ENCODE measurements at regions of chr17 and their contacts with region 1.

Region 1: GRCh38 chr17:2041561-2042366 is at the start of gene OVCA2:
- DNase-seq: peak; percentile 98
- ATAC-seq: peak; percentile 92
- H3K4me3 ChIP-seq: peak within 1 kb of the TSS; percentile 69 to 84 (median 81)
- H3K4me3 Mint-ChIP-seq: peak within 1 kb of the TSS; percentile 91
- H3K27ac ChIP-seq: peak within 1 kb of the TSS; percentile 78 to 94
- H3K27ac Mint-ChIP-seq: peak within 1 kb of the TSS; percentile 92
- H3K4me1 ChIP-seq: peaks cover 12 to 15% of the 10 kb centered on the region in 2 donors
- H3K4me1 Mint-ChIP-seq: peaks cover 25% of the 10 kb centered on the region
- H3K27me3 ChIP-seq: no peaks in the 10 kb centered on the region
- H3K27me3 Mint-ChIP-seq: no peaks in the 10 kb centered on the region
- CTCF ChIP-seq: peak; percentile 59
- total RNA-seq, gene OVCA2: 22.4 and 23.2 TPM in 2 replicates

Region 2: DNA sequence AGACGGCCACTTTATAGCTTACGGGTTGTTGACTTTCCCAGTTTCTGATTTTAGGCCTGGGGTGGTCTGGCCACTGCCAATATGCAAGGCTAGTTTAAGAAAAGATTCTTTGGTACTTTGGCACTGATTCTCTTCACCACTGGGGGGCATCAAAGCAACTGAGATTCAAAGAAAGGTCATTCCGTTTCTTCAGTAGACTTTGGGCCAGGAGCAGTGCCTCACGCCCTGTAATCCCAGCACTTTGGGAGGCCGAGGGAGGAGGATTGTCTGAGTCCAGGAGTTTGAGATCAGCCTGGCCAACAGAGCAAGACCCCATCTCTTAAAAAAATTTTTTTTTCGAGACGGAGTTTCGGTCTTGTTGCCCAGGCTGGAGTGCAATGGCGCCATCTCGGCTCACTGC is 158.9 kb before region 1 on chr17:
- CTCF ChIA-PET with region 1: interaction called, 6 read pairs
- POLR2A ChIA-PET with region 1: no interaction called
- intact Hi-C with region 1: loop called (anchors 5 kb)
- DNase-seq: peak; percentile 55
- ATAC-seq: peak; percentile 53
- H3K4me3 ChIP-seq: no peak overlapping the region
- H3K4me3 Mint-ChIP-seq: no peak overlapping the region
- H3K27ac ChIP-seq: no peak overlapping the region
- H3K27ac Mint-ChIP-seq: no peak overlapping the region
- H3K4me1 ChIP-seq: no peaks in the 10 kb centered on the region
- H3K4me1 Mint-ChIP-seq: no peaks in the 10 kb centered on the region
- H3K27me3 ChIP-seq: no peaks in the 10 kb centered on the region
- H3K27me3 Mint-ChIP-seq: no peaks in the 10 kb centered on the region
- CTCF ChIP-seq: peak; percentile 60

Region 3: DNA sequence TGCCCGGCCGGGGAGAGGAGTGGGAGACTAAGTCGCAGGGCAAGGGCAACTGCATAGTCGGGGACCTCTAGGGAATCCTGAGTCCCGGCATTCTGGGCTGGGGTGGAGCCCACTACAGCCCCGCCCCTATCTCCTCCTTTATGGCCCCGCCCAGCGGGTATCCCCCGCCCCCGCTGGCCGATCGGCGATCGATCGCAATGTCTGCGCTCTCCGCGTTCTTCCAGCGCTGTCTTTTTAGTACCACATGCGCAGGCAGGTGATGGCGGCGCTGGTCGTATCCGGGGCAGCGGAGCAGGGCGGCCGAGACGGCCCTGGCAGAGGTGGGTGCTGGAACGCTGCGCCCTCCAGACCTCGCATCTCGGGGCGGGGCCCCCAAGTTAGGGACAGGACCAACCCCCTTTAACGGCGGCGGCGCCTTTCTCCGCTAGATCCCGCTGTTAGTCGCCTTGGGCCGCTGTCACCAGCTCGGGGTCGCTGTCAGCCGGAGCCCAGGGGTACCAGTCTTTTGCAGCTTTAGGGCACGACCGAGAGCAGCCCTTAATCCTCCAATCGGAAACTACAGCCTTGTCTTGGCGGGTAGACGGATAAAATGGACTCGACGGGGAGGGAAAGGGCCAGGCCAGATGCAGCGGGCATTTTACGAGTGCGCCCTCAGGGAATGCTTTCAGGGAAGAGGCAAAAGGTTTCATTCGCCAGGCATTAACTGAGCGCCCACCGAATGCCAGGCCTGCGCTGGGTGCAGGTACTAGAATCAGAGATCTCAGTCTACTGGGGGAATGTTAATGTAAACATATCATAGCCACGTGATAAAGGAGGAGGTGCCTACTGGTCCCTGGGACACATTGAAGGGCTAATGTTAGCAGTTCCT is 11.6 kb before region 1 on chr17 and contains the start of gene DPH1:
- CTCF ChIA-PET with region 1: interaction called, 12 read pairs
- POLR2A ChIA-PET with region 1: interaction called, 9 read pairs
- intact Hi-C with region 1: loop called (anchors 1 kb)
- DNase-seq: peak; percentile 90
- ATAC-seq: peak; percentile 78
- H3K4me3 ChIP-seq: peak within 1 kb of the TSS; percentile 89 to 100 (median 98)
- H3K4me3 Mint-ChIP-seq: peak within 1 kb of the TSS; percentile 98
- H3K27ac ChIP-seq: peak within 1 kb of the TSS; percentile 48 to 79
- H3K27ac Mint-ChIP-seq: peak within 1 kb of the TSS; percentile 88
- H3K4me1 ChIP-seq: peaks cover 22 to 48% of the 10 kb centered on the region in 2 donors
- H3K4me1 Mint-ChIP-seq: peaks cover 40% of the 10 kb centered on the region
- H3K27me3 ChIP-seq: peaks cover 0 to 34% (median 11%) of the 10 kb centered on the region in 4 experiments
- H3K27me3 Mint-ChIP-seq: peaks cover 19% of the 10 kb centered on the region
- CTCF ChIP-seq: no peak
- total RNA-seq, gene DPH1: 76.6 and 83.6 TPM in 2 replicates

Region 4: GRCh38 chr17:2056206-2057174 is 14.7 kb after region 1 on chr17:
- CTCF ChIA-PET with region 1: no interaction called
- POLR2A ChIA-PET with region 1: no interaction called
- intact Hi-C with region 1: no loop called
- DNase-seq: peak; percentile 81
- ATAC-seq: no peak
- H3K4me3 ChIP-seq: peak overlapping the region in 4 of 5 experiments; percentile 4 to 57 (median 37)
- H3K4me3 Mint-ChIP-seq: peak overlapping the region; percentile 82
- H3K27ac ChIP-seq: no peak overlapping the region
- H3K27ac Mint-ChIP-seq: peak overlapping the region; percentile 68
- H3K4me1 ChIP-seq: peaks cover 55 to 65% of the 10 kb centered on the region in 2 donors
- H3K4me1 Mint-ChIP-seq: peaks cover 43% of the 10 kb centered on the region
- H3K27me3 ChIP-seq: peaks cover 0 to 54% (median 11%) of the 10 kb centered on the region in 4 experiments
- H3K27me3 Mint-ChIP-seq: peaks cover 7% of the 10 kb centered on the region
- CTCF ChIP-seq: no peak

Region 5: DNA sequence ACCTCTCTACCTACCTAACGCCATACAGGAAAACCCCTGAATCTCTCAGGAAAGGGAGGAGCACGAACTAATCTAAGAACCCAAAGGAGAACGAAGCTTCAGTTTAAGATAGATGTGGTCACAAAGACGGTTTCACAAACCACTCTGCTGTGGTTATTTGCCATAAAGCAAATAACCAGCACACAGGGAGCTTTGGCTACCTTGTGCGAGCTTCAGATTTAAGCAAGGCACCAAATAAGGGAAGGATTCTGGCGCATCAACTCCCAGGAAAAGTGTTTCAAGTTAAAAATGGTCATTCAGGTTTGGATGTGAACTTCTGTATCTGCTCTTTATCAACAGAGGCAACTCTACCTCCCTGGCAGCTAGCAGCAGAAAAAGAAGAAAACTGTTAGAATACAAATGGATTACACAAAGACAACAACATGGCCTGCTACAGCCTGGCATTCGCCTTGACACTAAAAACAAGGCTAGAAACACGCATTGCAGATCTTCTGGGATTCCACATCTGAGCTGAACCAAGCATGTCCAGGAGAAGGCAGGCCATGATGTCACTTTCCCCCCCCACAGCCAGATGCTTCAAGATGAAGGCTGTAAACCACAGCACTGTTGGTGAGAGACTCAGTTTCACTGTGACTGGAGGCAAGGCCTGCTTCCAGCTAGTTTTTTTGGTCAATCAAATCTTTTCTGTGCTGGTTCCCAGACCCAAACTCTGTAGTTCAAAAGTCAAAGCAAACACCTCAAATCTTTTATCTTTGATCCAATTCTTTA is 218.2 kb after region 1 on chr17:
- CTCF ChIA-PET with region 1: no interaction called
- POLR2A ChIA-PET with region 1: interaction called, 10 read pairs
- intact Hi-C with region 1: no loop called
- DNase-seq: no peak
- ATAC-seq: no peak
- H3K4me3 ChIP-seq: no peak overlapping the region
- H3K4me3 Mint-ChIP-seq: no peak overlapping the region
- H3K27ac ChIP-seq: peak overlapping the region; percentile 36 to 63
- H3K27ac Mint-ChIP-seq: peak overlapping the region; percentile 17
- H3K4me1 ChIP-seq: peaks cover 0 to 12% of the 10 kb centered on the region in 2 donors
- H3K4me1 Mint-ChIP-seq: peaks cover 16% of the 10 kb centered on the region
- H3K27me3 ChIP-seq: no peaks in the 10 kb centered on the region
- H3K27me3 Mint-ChIP-seq: no peaks in the 10 kb centered on the region
- CTCF ChIP-seq: no peak

Region 6: GRCh38 chr17:2392252-2393173 is 350.7 kb after region 1 on chr17:
- CTCF ChIA-PET with region 1: no interaction called
- POLR2A ChIA-PET with region 1: no interaction called
- intact Hi-C with region 1: loop called (anchors 2 kb)
- DNase-seq: peak; percentile 98
- ATAC-seq: peak; percentile 70
- H3K4me3 ChIP-seq: peak overlapping the region; percentile 35 to 98 (median 85)
- H3K4me3 Mint-ChIP-seq: peak overlapping the region; percentile 97
- H3K27ac ChIP-seq: peak overlapping the region; percentile 97 to 99
- H3K27ac Mint-ChIP-seq: peak overlapping the region; percentile 96
- H3K4me1 ChIP-seq: peaks cover 44 to 58% of the 10 kb centered on the region in 2 donors
- H3K4me1 Mint-ChIP-seq: peaks cover 58% of the 10 kb centered on the region
- H3K27me3 ChIP-seq: no peaks in the 10 kb centered on the region
- H3K27me3 Mint-ChIP-seq: no peaks in the 10 kb centered on the region
- CTCF ChIP-seq: no peak